ENCODE measurements at regions of chr5 and their contacts with region 1.

Region 1: GRCh38 chr5:136638077-136638476 is 272.7 kb upstream of the TRPC7 start:
- DNase-seq: no peak
- H3K4me3 ChIP-seq: no peak overlapping the region
- H3K4me3 Mint-ChIP-seq: no peak overlapping the region
- H3K27ac Mint-ChIP-seq: no peak overlapping the region
- H3K4me1 ChIP-seq: no peaks in the 10 kb centered on the region
- H3K4me1 Mint-ChIP-seq: no peaks in the 10 kb centered on the region
- H3K27me3 ChIP-seq: peaks cover 1% of the 10 kb centered on the region; the same call in 1 of the 2 replicates
- H3K27me3 Mint-ChIP-seq: peaks cover 6% of the 10 kb centered on the region
- CTCF ChIP-seq: peak in 1 of 2 experiments; percentile 32

Region 2: DNA sequence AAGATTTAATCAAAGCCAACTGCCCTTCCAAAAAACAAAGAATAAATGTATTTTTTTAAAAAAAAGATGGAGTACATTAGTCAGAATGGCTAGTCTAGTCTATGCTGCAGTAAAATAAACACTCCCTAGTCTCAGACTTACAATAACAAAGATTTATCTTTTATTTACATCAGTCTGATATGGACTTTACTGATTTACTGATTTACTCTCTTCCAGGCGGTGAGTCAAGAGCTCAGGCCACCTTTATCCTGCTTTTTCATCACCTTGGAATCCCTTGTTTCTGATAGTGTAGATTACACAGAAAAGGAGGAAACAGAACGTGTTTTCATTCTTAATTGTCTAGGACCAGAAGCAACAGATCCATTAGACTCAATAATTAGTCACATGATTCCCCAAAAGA is 17.4 kb after region 1 on chr5:
- CTCF ChIA-PET with region 1: no interaction called
- POLR2A ChIA-PET with region 1: no interaction called
- intact Hi-C with region 1: no loop called
- DNase-seq: no peak
- H3K4me3 ChIP-seq: no peak overlapping the region
- H3K4me3 Mint-ChIP-seq: no peak overlapping the region
- H3K27ac Mint-ChIP-seq: no peak overlapping the region
- H3K4me1 ChIP-seq: peaks cover 4% of the 10 kb centered on the region
- H3K4me1 Mint-ChIP-seq: no peaks in the 10 kb centered on the region
- H3K27me3 ChIP-seq: no peaks in the 10 kb centered on the region
- H3K27me3 Mint-ChIP-seq: no peaks in the 10 kb centered on the region
- CTCF ChIP-seq: no peak

Region 3: GRCh38 chr5:136686192-136686872 is 48.3 kb after region 1 on chr5:
- CTCF ChIA-PET with region 1: interaction called, 15 read pairs
- POLR2A ChIA-PET with region 1: no interaction called
- intact Hi-C with region 1: loop called (anchors 1 kb)
- DNase-seq: peak; percentile 36 to 48
- H3K4me3 ChIP-seq: no peak overlapping the region
- H3K4me3 Mint-ChIP-seq: no peak overlapping the region
- H3K27ac Mint-ChIP-seq: no peak overlapping the region
- H3K4me1 ChIP-seq: peaks cover 9% of the 10 kb centered on the region; the same call in 1 of the 2 replicates
- H3K4me1 Mint-ChIP-seq: peaks cover 11% of the 10 kb centered on the region
- H3K27me3 ChIP-seq: no peaks in the 10 kb centered on the region
- H3K27me3 Mint-ChIP-seq: peaks cover 2% of the 10 kb centered on the region
- CTCF ChIP-seq: peak; percentile 51 to 80

Region 4: DNA sequence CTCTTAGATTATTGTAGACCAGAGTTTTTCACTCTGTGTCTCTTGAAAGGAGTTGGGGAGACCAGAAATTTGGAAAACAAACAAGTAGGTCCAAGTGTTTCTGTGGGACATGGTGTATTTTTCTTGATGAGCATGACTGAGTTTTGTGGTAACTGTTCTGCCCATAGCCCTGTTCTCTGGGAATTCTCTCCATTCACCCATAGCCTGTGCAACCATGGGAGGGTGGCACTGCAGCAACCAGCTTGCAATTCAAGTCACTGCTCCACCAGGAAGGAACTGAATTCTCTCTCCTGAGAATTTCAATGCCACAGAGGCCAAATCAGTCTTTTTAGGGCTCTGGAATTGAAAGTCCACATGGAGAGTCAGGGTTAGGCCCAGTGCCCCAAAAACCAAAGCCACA is 202.5 kb after region 1 on chr5:
- CTCF ChIA-PET with region 1: no interaction called
- POLR2A ChIA-PET with region 1: no interaction called
- intact Hi-C with region 1: no loop called
- DNase-seq: no peak
- H3K4me3 ChIP-seq: no peak overlapping the region
- H3K4me3 Mint-ChIP-seq: no peak overlapping the region
- H3K27ac Mint-ChIP-seq: no peak overlapping the region
- H3K4me1 ChIP-seq: no peaks in the 10 kb centered on the region
- H3K4me1 Mint-ChIP-seq: no peaks in the 10 kb centered on the region
- H3K27me3 ChIP-seq: 0 out of 2 replicates have a peak, but pooled peaks cover 1% of the 10 kb centered on the region
- H3K27me3 Mint-ChIP-seq: peaks cover 9% of the 10 kb centered on the region
- CTCF ChIP-seq: no peak

Region 5: GRCh38 chr5:136853971-136854370 is 215.9 kb after region 1 on chr5:
- CTCF ChIA-PET with region 1: no interaction called
- POLR2A ChIA-PET with region 1: no interaction called
- intact Hi-C with region 1: no loop called
- DNase-seq: no peak
- H3K4me3 ChIP-seq: no peak overlapping the region
- H3K4me3 Mint-ChIP-seq: no peak overlapping the region
- H3K27ac Mint-ChIP-seq: no peak overlapping the region
- H3K4me1 ChIP-seq: no peaks in the 10 kb centered on the region
- H3K4me1 Mint-ChIP-seq: no peaks in the 10 kb centered on the region
- H3K27me3 ChIP-seq: no peaks in the 10 kb centered on the region
- H3K27me3 Mint-ChIP-seq: peaks cover 8% of the 10 kb centered on the region
- CTCF ChIP-seq: no peak

Region 6: GRCh38 chr5:137461391-137462264 is 823.6 kb after region 1 on chr5:
- CTCF ChIA-PET with region 1: no interaction called
- POLR2A ChIA-PET with region 1: no interaction called
- intact Hi-C with region 1: no loop called
- DNase-seq: no peak
- H3K4me3 ChIP-seq: no peak overlapping the region
- H3K4me3 Mint-ChIP-seq: no peak overlapping the region
- H3K27ac Mint-ChIP-seq: no peak overlapping the region
- H3K4me1 ChIP-seq: no peaks in the 10 kb centered on the region
- H3K4me1 Mint-ChIP-seq: no peaks in the 10 kb centered on the region
- H3K27me3 ChIP-seq: no peaks in the 10 kb centered on the region
- H3K27me3 Mint-ChIP-seq: peaks cover 31% of the 10 kb centered on the region
- CTCF ChIP-seq: peak in 1 of 2 experiments; percentile 15

Measured in Caco-2 (cell line).